IMR-90 (cell line): ENCODE measurements at regions of chrX and their contacts with region 1.

Region 1: DNA sequence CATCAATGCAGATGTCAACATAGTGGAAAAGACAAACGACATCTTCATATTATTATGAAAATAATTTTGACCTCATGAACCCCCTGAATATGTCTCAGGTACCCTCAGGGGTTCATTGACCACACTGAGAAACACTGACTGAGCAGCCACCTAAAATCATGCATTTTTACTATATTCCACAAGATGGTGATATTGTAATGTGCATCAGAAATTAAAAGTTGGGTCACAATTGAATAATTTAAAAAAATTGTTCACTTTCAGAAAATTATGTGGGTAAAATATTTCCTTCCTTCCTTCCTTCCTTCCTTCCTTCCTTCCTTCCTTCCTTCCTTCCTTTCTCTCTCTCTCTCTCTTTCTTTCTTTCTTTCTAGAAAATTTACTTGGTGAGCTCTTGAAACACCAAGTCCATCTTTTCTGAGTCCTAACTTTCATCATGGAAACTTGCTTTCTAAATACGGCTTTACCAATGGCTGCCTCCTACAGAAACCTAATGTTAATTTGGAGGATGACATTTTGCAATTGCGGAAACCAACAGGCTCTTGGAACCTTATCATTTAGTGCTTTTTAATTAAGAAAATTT is 103.6 kb downstream of the RTL3 start:
- DNase-seq: no peak
- ATAC-seq: no peak
- H3K4me3 ChIP-seq: no peak overlapping the region
- H3K27ac ChIP-seq: no peak overlapping the region
- H3K4me1 ChIP-seq: no peaks in the 10 kb centered on the region
- H3K27me3 ChIP-seq: no peaks in the 10 kb centered on the region
- CTCF ChIP-seq: peak; percentile 58
- POLR2A ChIP-seq: no peak
- RAD21 ChIP-seq: peak; percentile 70

Region 2: DNA sequence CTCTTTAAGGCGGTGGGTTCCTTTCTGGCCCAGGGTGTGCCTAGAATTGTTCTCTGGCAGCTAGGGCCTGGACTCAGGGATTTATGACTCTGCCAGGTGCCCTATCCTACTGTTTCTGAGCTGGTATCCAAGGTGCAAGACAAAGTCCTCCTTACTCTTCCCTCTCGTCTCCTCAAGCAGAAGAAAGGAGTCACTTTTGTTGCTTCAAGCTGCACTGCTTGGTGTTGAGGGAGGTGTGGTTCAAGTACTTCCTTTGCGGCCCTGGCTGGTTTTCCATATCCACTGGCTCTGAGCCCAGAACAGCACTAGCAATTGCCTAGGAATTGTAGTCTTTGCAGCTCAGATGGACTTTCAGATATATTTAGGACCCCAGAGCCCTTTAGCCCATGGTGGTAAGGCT is 64.3 kb after region 1 on chrX:
- CTCF ChIA-PET with region 1: no interaction called
- POLR2A ChIA-PET with region 1: no interaction called
- dilution Hi-C with region 1: no loop called
- in situ Hi-C with region 1: no loop called
- intact Hi-C with region 1: loop called (anchors 10 kb)
- DNase-seq: no peak
- ATAC-seq: no peak
- H3K4me3 ChIP-seq: no peak overlapping the region
- H3K27ac ChIP-seq: no peak overlapping the region
- H3K4me1 ChIP-seq: no peaks in the 10 kb centered on the region
- H3K27me3 ChIP-seq: no peaks in the 10 kb centered on the region
- CTCF ChIP-seq: no peak
- POLR2A ChIP-seq: no peak
- RAD21 ChIP-seq: no peak

Region 3: GRCh38 chrX:78643096-78643495 is 87.6 kb after region 1 on chrX:
- CTCF ChIA-PET with region 1: no interaction called
- POLR2A ChIA-PET with region 1: no interaction called
- dilution Hi-C with region 1: no loop called
- in situ Hi-C with region 1: no loop called
- intact Hi-C with region 1: no loop called
- DNase-seq: peak; percentile 54
- ATAC-seq: no peak
- H3K4me3 ChIP-seq: no peak overlapping the region
- H3K27ac ChIP-seq: no peak overlapping the region
- H3K4me1 ChIP-seq: no peaks in the 10 kb centered on the region
- H3K27me3 ChIP-seq: no peaks in the 10 kb centered on the region; the same call in 1 of the 2 replicates
- CTCF ChIP-seq: no peak
- POLR2A ChIP-seq: no peak
- RAD21 ChIP-seq: no peak

Region 4: DNA sequence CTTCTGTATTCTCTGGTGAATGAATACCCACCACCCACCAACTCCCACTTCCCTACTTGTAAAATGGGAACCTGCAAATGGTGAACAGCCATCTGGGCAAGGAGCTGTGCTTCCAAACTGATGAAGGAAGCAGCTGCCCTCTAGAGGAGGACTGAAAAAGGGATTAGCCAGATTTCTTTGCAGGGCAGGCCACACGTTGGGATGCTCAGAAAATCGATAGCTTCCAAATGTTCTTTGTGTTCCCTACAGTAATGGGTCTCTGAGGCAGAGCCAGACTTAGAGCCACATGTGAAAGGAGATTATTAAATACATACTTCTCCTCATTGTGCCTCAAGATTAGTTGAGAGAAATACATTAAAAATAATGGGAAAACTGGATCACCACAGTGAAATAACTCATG is 152.8 kb after region 1 on chrX:
- CTCF ChIA-PET with region 1: interaction called, 3 read pairs
- POLR2A ChIA-PET with region 1: no interaction called
- dilution Hi-C with region 1: no loop called
- in situ Hi-C with region 1: no loop called
- intact Hi-C with region 1: loop called (anchors 1 kb)
- DNase-seq: peak; percentile 41
- ATAC-seq: peak; percentile 73
- H3K4me3 ChIP-seq: no peak overlapping the region
- H3K27ac ChIP-seq: no peak overlapping the region
- H3K4me1 ChIP-seq: no peaks in the 10 kb centered on the region
- H3K27me3 ChIP-seq: no peaks in the 10 kb centered on the region
- CTCF ChIP-seq: peak; percentile 61
- POLR2A ChIP-seq: no peak
- RAD21 ChIP-seq: peak; percentile 68

Region 5: GRCh38 chrX:78886550-78886949 is 331.1 kb after region 1 on chrX:
- CTCF ChIA-PET with region 1: no interaction called
- POLR2A ChIA-PET with region 1: no interaction called
- dilution Hi-C with region 1: no loop called
- in situ Hi-C with region 1: no loop called
- intact Hi-C with region 1: loop called (anchors 2 kb)
- DNase-seq: no peak
- ATAC-seq: no peak
- H3K4me3 ChIP-seq: no peak overlapping the region
- H3K27ac ChIP-seq: no peak overlapping the region
- H3K4me1 ChIP-seq: no peaks in the 10 kb centered on the region
- H3K27me3 ChIP-seq: no peaks in the 10 kb centered on the region
- CTCF ChIP-seq: peak; percentile 31
- POLR2A ChIP-seq: no peak
- RAD21 ChIP-seq: peak; percentile 27; the same call in 1 of the 2 replicates

Region 6: DNA sequence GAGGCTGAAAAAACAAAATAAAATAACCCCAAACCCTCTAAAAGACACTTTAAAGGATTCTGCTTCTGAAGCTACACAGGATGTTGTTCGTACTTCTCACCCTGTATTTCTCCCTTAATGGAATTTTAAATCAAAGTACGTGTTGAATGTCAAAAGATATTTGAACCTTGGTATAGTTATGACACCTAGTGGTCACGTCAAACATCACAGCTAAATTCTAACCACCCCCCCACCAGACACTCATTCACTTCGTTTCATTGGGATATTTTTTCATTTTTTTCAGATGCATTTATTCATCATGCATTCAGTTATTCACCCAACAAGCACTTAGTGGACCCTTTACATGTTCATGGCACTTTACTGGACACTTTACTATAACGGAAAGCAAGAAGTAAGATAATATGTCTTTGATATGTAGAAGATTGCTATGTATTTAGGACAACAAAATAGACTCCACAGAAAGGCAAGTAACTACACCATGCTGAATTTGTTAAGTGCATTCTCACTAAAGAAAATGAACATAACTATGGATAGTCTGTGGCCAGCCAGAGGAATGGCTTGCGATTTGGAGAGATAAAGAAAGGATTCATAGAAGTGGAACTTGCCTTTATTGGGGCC is 526.5 kb after region 1 on chrX:
- CTCF ChIA-PET with region 1: interaction called, 3 read pairs
- POLR2A ChIA-PET with region 1: no interaction called
- dilution Hi-C with region 1: no loop called
- in situ Hi-C with region 1: loop called (anchors 25 kb)
- intact Hi-C with region 1: loop called (anchors 1 kb)
- DNase-seq: peak; percentile 4
- ATAC-seq: peak; percentile 62; the same call in 1 of the 2 replicates
- H3K4me3 ChIP-seq: no peak overlapping the region
- H3K27ac ChIP-seq: no peak overlapping the region
- H3K4me1 ChIP-seq: no peaks in the 10 kb centered on the region
- H3K27me3 ChIP-seq: no peaks in the 10 kb centered on the region
- CTCF ChIP-seq: peak; percentile 54
- POLR2A ChIP-seq: no peak
- RAD21 ChIP-seq: peak; percentile 55

Region 7: DNA sequence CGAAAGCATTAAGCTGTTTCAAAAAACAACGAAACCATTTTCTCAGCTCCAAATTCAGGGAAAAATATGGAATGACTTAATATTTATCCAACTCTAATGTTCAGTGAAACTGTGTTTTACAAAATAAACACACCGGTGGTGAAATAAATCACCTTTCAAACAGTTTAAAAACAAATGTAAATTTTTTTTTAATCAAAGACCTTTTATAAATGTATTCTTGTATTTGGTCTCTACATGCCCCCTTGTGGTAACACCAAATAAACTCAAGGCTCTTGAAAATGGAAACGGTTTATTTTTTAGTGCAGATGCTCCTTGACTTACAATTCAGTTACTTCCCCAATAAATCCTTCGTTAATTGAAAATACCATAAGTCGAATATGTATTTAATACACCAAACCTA is 857.5 kb after region 1 on chrX:
- CTCF ChIA-PET with region 1: no interaction called
- POLR2A ChIA-PET with region 1: no interaction called
- dilution Hi-C with region 1: no loop called
- in situ Hi-C with region 1: no loop called
- intact Hi-C with region 1: loop called (anchors 2 kb)
- DNase-seq: peak; percentile 1
- ATAC-seq: no peak
- H3K4me3 ChIP-seq: no peak overlapping the region
- H3K27ac ChIP-seq: no peak overlapping the region
- H3K4me1 ChIP-seq: no peaks in the 10 kb centered on the region
- H3K27me3 ChIP-seq: no peaks in the 10 kb centered on the region
- CTCF ChIP-seq: peak; percentile 34
- POLR2A ChIP-seq: no peak
- RAD21 ChIP-seq: no peak

Region 8: DNA sequence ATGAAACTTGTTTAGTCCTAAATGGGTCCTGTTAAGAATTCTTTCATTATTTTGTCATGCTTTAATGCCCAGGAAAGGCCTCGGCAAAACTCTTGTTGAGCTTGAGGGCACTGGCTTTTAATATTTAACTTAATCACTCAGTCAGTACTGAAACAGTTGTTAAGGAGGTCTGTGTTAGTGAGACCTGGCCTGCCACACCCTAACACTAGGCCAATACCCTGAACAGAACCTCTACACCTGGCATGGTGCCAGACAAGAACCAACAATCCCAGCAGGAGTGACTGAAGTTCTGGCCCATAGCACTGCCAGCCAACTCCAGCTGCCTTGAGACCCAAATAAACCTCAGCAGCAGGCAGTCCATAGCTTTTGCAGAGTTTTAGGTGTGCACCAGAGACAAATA is 897.4 kb after region 1 on chrX:
- CTCF ChIA-PET with region 1: no interaction called
- POLR2A ChIA-PET with region 1: no interaction called
- dilution Hi-C with region 1: no loop called
- in situ Hi-C with region 1: no loop called
- intact Hi-C with region 1: loop called (anchors 5 kb)
- DNase-seq: no peak
- ATAC-seq: no peak
- H3K4me3 ChIP-seq: no peak overlapping the region
- H3K27ac ChIP-seq: no peak overlapping the region
- H3K4me1 ChIP-seq: no peaks in the 10 kb centered on the region
- H3K27me3 ChIP-seq: no peaks in the 10 kb centered on the region
- CTCF ChIP-seq: no peak
- POLR2A ChIP-seq: no peak
- RAD21 ChIP-seq: no peak